Heart right ventricle (tissue), 16 donors: ENCODE measurements at regions of chr11 and their contacts with region 1.

Region 1: GRCh38 chr11:64924102-64924851 is at the start of gene PPP2R5B:
- DNase-seq: peak; percentile 92 to 94
- ATAC-seq: peak; percentile 95 to 98 (median 98)
- H3K4me3 ChIP-seq: peak within 1 kb of the TSS; percentile 84 to 100 (median 98)
- H3K27ac ChIP-seq: peak within 1 kb of the TSS; percentile 89 to 99 (median 96)
- H3K4me1 ChIP-seq: peaks cover 10 to 43% (median 27%) of the 10 kb centered on the region in 9 donors
- H3K27me3 ChIP-seq: no peaks in the 10 kb centered on the region
- CTCF ChIP-seq: no peak
- total RNA-seq, gene PPP2R5B: 13.4 to 29.8 (median 20.4) TPM

Region 2: GRCh38 chr11:64976651-64977050 is 52.4 kb after region 1 on chr11:
- intact Hi-C with region 1: loop called in 1 of 10 experiments (anchors 5 kb)
- DNase-seq: no peak
- ATAC-seq: no peak
- H3K4me3 ChIP-seq: no peak overlapping the region
- H3K27ac ChIP-seq: no peak overlapping the region
- H3K4me1 ChIP-seq: peaks cover 1 to 11% (median 7%) of the 10 kb centered on the region in 9 donors
- H3K27me3 ChIP-seq: peaks cover 0 to 32% (median 4%) of the 10 kb centered on the region in 7 donors
- CTCF ChIP-seq: no peak

Region 3: GRCh38 chr11:64996710-64997380 is 72.6 kb after region 1 on chr11 and contains the start of gene BATF2:
- intact Hi-C with region 1: loop called in 5 of 10 experiments (anchors 5 to 10 kb)
- DNase-seq: peak; percentile 70 to 82
- ATAC-seq: peak; percentile 86 to 96 (median 92)
- H3K4me3 ChIP-seq: peak within 1 kb of the TSS; percentile 1 to 65 (median 52)
- H3K27ac ChIP-seq: peak within 1 kb of the TSS in 9 of 10 donors; percentile 41 to 88 (median 72)
- H3K4me1 ChIP-seq: peaks cover 0 to 51% (median 17%) of the 10 kb centered on the region in 9 donors
- H3K27me3 ChIP-seq: no peaks in the 10 kb centered on the region
- CTCF ChIP-seq: peak in 8 of 9 donors; percentile 22 to 62 (median 48)
- total RNA-seq, gene BATF2: 0.66 to 31.8 (median 1.7) TPM

Region 4: DNA sequence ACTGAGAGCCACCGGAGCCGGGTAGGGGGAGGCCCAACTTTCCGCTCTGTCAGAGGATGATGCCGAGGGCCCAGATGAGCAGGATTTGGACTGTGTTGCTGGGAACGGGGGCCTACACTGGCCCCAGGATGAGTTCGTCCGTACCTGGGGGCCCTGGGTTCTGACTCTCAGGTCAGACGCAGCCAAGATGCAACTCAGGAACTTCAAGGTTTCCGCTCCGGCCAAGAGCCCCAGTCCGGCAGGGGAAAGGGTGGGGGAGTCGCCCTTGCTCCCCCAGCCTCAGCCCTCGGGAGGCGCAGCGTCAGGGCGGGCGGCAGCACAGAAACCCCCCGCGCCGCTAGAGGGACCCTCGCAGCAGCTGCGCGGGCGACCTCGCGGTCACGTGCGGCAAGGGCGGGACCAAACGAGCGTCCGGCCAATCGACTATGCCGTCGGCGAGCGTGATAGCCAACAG is 89.4 kb after region 1 on chr11:
- intact Hi-C with region 1: loop called in 4 of 10 experiments (anchors 5 kb)
- DNase-seq: peak; percentile 94
- ATAC-seq: peak; percentile 93 to 96 (median 96)
- H3K4me3 ChIP-seq: peak overlapping the region; percentile 57 to 92 (median 76)
- H3K27ac ChIP-seq: peak overlapping the region; percentile 87 to 100 (median 98)
- H3K4me1 ChIP-seq: peaks cover 11 to 34% (median 20%) of the 10 kb centered on the region in 9 donors
- H3K27me3 ChIP-seq: no peaks in the 10 kb centered on the region
- CTCF ChIP-seq: peak in 2 of 9 donors; percentile 61 to 63

Region 5: GRCh38 chr11:65027213-65028067 is 103.2 kb after region 1 on chr11 and contains the start of gene SNX15:
- intact Hi-C with region 1: loop called in 1 of 10 experiments (anchors 5 kb)
- DNase-seq: peak; percentile 93 to 96
- ATAC-seq: peak; percentile 98 to 99 (median 99)
- H3K4me3 ChIP-seq: peak within 1 kb of the TSS; percentile 2 to 68 (median 64)
- H3K27ac ChIP-seq: peak within 1 kb of the TSS; percentile 82 to 92 (median 88)
- H3K4me1 ChIP-seq: peaks cover 0 to 22% (median 17%) of the 10 kb centered on the region in 9 donors
- H3K27me3 ChIP-seq: no peaks in the 10 kb centered on the region
- CTCF ChIP-seq: peak; percentile 75 to 92 (median 88)
- total RNA-seq, gene SNX15: 11.4 to 21.8 (median 15.2) TPM